ENCODE measurements at regions of chr5 and their contacts with region 1.

Region 1: GRCh38 chr5:172106511-172107356 is 81.3 kb downstream of the STK10 start:
- DNase-seq: peak; percentile 52 to 82 (median 66)
- ATAC-seq: peak; percentile 22
- H3K4me3 ChIP-seq: no peak overlapping the region
- H3K4me3 Mint-ChIP-seq: peak overlapping the region; percentile 42
- H3K27ac ChIP-seq: peak overlapping the region in 1 of 2 donors; percentile 5
- H3K27ac Mint-ChIP-seq: peak overlapping the region; percentile 81
- H3K4me1 ChIP-seq: peaks cover 49% of the 10 kb centered on the region
- H3K4me1 Mint-ChIP-seq: peaks cover 46% of the 10 kb centered on the region
- H3K27me3 ChIP-seq: no peaks in the 10 kb centered on the region
- H3K27me3 Mint-ChIP-seq: no peaks in the 10 kb centered on the region
- CTCF ChIP-seq: peak; percentile 98

Region 2: DNA sequence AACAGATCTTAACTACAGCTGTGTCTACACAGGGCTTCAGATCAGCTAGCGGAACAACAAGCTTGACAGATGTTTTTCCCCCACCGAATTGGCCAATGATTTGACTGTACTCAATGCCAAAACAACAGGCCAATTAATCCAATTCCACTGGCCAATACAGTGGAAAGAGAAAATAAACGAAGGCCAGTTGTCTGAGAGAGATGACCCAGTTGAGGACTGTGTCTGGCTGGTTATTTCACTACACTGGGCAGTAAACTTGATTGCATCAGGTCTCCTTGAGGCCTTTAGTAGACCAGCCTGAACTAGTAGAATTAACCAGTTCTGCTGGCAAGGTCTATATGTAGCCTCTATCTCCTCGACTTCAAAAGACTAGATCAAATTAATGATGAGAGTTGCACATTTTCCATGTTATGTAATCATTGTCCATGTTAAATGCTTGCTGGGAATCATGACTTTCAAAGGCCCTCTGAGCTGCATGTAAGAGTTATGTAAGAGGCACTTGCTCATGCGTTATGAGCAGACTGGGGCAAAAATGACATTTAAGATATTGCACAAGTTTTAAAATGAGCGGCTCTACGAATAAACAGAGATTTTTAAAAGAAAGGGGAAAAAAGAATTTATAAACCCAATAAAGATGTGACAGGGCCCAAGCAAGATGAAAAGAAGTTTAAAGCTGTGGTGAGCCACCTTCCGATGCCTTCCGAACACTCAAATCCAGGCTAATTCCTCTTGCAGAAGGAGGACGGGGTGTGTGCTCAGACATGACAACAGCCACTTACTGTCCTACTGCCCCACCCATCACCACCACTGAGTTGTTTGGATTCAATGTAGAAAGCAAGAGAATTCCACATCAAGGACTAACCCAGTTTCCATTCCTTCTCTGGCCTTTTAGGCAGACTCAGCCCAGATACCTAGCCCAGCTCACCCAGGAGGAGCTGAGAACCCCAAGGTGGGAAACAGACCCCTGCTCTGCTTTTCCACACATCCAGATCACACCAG is 292.6 kb before region 1 on chr5:
- CTCF ChIA-PET with region 1: no interaction called
- POLR2A ChIA-PET with region 1: no interaction called
- intact Hi-C with region 1: no loop called
- DNase-seq: no peak
- ATAC-seq: no peak
- H3K4me3 ChIP-seq: no peak overlapping the region
- H3K4me3 Mint-ChIP-seq: no peak overlapping the region
- H3K27ac ChIP-seq: no peak overlapping the region
- H3K27ac Mint-ChIP-seq: no peak overlapping the region
- H3K4me1 ChIP-seq: no peaks in the 10 kb centered on the region
- H3K4me1 Mint-ChIP-seq: no peaks in the 10 kb centered on the region
- H3K27me3 ChIP-seq: no peaks in the 10 kb centered on the region
- H3K27me3 Mint-ChIP-seq: no peaks in the 10 kb centered on the region
- CTCF ChIP-seq: no peak

Region 3: GRCh38 chr5:171913987-171914273 is 192.8 kb before region 1 on chr5:
- CTCF ChIA-PET with region 1: no interaction called
- POLR2A ChIA-PET with region 1: no interaction called
- intact Hi-C with region 1: loop called in 1 of 2 experiments (anchors 5 kb)
- DNase-seq: no peak
- ATAC-seq: no peak
- H3K4me3 ChIP-seq: no peak overlapping the region
- H3K4me3 Mint-ChIP-seq: no peak overlapping the region
- H3K27ac ChIP-seq: no peak overlapping the region
- H3K27ac Mint-ChIP-seq: peak overlapping the region; percentile 9
- H3K4me1 ChIP-seq: no peaks in the 10 kb centered on the region
- H3K4me1 Mint-ChIP-seq: peaks cover 45% of the 10 kb centered on the region
- H3K27me3 ChIP-seq: no peaks in the 10 kb centered on the region
- H3K27me3 Mint-ChIP-seq: no peaks in the 10 kb centered on the region
- CTCF ChIP-seq: no peak

Region 4: DNA sequence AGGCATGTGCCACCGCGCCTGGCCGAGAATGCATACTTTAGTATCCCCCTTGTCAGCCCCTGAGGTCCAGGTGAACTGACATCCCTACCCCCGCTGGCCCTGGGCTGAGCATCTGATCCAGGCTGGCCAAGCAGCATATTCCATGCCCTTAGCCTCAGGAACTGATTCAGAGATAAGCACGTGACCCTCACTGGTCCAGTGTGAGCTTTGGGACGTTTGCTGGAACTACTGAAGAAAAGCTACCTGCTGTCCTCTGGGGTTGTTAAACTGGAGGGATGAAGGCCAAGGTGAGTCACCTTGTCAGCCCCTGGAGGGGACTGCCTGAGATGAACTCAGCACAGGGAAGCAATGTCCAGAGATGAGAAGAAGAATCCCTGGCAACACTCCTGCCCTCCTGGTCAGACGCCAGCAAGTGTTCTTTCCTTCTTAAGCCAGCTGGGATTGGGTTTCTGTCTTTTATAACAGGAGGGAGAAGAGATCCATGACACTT is 41.2 kb before region 1 on chr5:
- CTCF ChIA-PET with region 1: no interaction called
- POLR2A ChIA-PET with region 1: interaction called, 7 read pairs
- intact Hi-C with region 1: loop called in 1 of 2 experiments (anchors 5 kb)
- DNase-seq: peak in 1 of 14 experiments; percentile 34
- ATAC-seq: no peak
- H3K4me3 ChIP-seq: no peak overlapping the region
- H3K4me3 Mint-ChIP-seq: no peak overlapping the region
- H3K27ac ChIP-seq: peak overlapping the region; percentile 69 to 84
- H3K27ac Mint-ChIP-seq: peak overlapping the region; percentile 89
- H3K4me1 ChIP-seq: peaks cover 44% of the 10 kb centered on the region
- H3K4me1 Mint-ChIP-seq: peaks cover 76% of the 10 kb centered on the region
- H3K27me3 ChIP-seq: no peaks in the 10 kb centered on the region
- H3K27me3 Mint-ChIP-seq: no peaks in the 10 kb centered on the region
- CTCF ChIP-seq: no peak

Region 5: DNA sequence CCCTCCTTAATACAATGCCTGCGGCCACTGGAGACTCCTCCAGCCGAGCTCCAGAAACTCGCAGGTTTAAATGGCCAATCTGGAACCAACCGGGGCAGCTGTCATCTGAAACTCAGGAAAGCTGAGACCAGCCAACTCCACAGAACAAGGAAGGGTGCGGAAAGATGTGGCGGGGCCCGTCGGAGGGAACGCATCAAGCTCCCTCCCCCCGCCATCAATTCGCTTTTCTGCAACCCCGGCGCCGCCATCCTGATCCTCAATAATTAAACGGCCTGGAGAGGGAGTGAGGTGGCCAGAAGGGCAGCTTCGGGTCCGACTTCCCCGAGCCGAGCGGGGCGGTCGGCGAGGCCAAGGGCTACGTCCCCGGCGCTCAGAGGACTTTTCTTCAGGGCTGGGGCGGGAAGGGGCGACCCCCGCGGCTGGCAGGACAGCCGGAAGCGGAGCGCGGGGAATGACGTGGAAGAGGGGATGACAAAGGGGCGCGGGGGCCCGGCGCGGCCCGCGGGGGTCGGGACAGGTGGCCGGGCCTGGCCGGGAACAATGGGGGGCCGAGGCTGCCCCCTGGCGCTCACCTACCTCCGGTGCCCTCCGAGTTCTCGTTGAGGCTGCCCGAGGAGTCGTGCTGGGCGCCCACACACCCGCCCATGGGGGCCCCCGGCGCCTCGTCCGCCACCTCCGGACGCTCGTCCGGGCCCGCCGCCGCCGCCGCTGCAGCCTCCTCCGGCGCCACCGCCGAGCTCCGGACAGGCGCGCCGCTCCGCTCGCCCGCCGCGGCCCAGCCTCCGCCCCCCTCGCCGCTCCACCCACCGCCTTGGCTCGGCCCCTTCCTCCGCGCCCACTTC is 176.5 kb after region 1 on chr5 and contains the start of gene UBTD2:
- CTCF ChIA-PET with region 1: no interaction called
- POLR2A ChIA-PET with region 1: no interaction called
- intact Hi-C with region 1: loop called in 1 of 2 experiments (anchors 5 kb)
- DNase-seq: peak in 13 of 14 experiments; percentile 37 to 86 (median 70)
- ATAC-seq: peak; percentile 69
- H3K4me3 ChIP-seq: peak within 1 kb of the TSS; percentile 81
- H3K4me3 Mint-ChIP-seq: peak within 1 kb of the TSS; percentile 95
- H3K27ac ChIP-seq: no peak within 1 kb of the TSS
- H3K27ac Mint-ChIP-seq: peak within 1 kb of the TSS; percentile 68
- H3K4me1 ChIP-seq: peaks cover 14% of the 10 kb centered on the region
- H3K4me1 Mint-ChIP-seq: peaks cover 33% of the 10 kb centered on the region
- H3K27me3 ChIP-seq: no peaks in the 10 kb centered on the region
- H3K27me3 Mint-ChIP-seq: no peaks in the 10 kb centered on the region
- CTCF ChIP-seq: peak; percentile 68
- total RNA-seq, gene UBTD2: 0.66 to 1.1 TPM

Region 6: GRCh38 chr5:172697123-172698121 is 590.7 kb after region 1 on chr5:
- CTCF ChIA-PET with region 1: no interaction called
- POLR2A ChIA-PET with region 1: no interaction called
- intact Hi-C with region 1: loop called in 1 of 2 experiments (anchors 10 kb)
- DNase-seq: peak; percentile 74 to 92 (median 81)
- ATAC-seq: peak; percentile 97
- H3K4me3 ChIP-seq: peak overlapping the region; percentile 89
- H3K4me3 Mint-ChIP-seq: peak overlapping the region; percentile 91
- H3K27ac ChIP-seq: peak overlapping the region in 1 of 2 donors; percentile 75
- H3K27ac Mint-ChIP-seq: peak overlapping the region; percentile 72
- H3K4me1 ChIP-seq: peaks cover 24% of the 10 kb centered on the region
- H3K4me1 Mint-ChIP-seq: peaks cover 24% of the 10 kb centered on the region
- H3K27me3 ChIP-seq: peaks cover 9 to 10% of the 10 kb centered on the region in 2 experiments
- H3K27me3 Mint-ChIP-seq: peaks cover 17% of the 10 kb centered on the region
- CTCF ChIP-seq: peak; percentile 85